ENCODE measurements at regions of chr6 and their contacts with region 1.

Region 1: GRCh38 chr6:26045065-26045927 is 41.9 kb upstream of the HFE start:
- DNase-seq: peak; percentile 85
- H3K4me3 Mint-ChIP-seq: peak overlapping the region; percentile 90
- H3K27ac Mint-ChIP-seq: peak overlapping the region; percentile 100
- H3K4me1 Mint-ChIP-seq: peaks cover 41% of the 10 kb centered on the region
- H3K27me3 Mint-ChIP-seq: no peaks in the 10 kb centered on the region

Region 2: DNA sequence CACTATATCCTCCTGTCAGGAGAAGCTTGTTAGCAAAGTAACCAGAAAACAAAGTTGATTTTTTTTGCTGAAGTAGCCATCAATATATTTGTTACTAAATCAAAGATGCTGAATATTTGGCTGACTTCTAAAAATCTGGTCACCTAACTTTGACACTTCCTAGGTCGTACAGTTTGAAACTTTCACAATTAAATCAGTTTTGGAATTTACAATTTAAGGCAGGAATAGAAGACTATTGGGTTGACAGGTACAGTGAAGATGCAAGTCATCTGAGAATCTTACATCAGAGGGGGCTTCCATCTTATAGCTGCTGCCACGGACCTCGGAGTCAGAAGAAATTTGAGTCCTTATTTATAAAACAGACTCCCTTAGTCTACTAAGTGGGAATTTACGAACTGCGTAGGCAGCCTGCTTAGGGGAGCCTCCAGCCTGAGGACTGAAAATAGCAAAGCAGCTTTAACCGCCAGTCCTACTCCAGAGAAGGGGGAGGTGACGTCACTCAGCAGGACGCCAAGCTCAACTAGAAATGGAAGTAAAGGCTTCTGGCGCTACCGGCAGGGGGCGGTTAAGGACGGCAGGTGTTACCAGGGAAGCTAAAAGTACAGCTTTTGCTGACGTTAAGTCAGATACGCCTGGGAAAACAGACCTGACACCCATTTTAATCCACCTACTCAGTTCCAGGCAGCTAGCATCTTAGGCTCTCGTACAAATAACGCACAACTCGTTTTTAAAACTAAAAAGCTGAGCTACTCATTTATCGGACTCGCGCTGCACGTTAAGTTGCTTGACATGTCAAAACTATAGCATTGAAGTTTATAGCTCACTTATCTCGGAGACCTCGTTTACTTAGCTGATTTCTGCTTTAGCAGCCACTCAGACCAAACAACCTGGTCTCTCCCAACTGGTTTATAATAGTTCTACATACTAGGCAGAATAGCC is 19.1 kb before region 1 on chr6:
- CTCF ChIA-PET with region 1: interaction called, 28 read pairs
- DNase-seq: peak; percentile 98
- H3K4me3 Mint-ChIP-seq: peak overlapping the region; percentile 77
- H3K27ac Mint-ChIP-seq: peak overlapping the region; percentile 99
- H3K4me1 Mint-ChIP-seq: peaks cover 80% of the 10 kb centered on the region
- H3K27me3 Mint-ChIP-seq: no peaks in the 10 kb centered on the region

Region 3: GRCh38 chr6:26031595-26032339 is 13.5 kb before region 1 on chr6:
- CTCF ChIA-PET with region 1: interaction called, 28 read pairs
- DNase-seq: peak; percentile 95
- H3K4me3 Mint-ChIP-seq: peak overlapping the region; percentile 89
- H3K27ac Mint-ChIP-seq: peak overlapping the region; percentile 99
- H3K4me1 Mint-ChIP-seq: peaks cover 72% of the 10 kb centered on the region
- H3K27me3 Mint-ChIP-seq: no peaks in the 10 kb centered on the region